WTC11 (cell line): ENCODE measurements at regions of chr9 and their contacts with region 1.

Region 1: DNA sequence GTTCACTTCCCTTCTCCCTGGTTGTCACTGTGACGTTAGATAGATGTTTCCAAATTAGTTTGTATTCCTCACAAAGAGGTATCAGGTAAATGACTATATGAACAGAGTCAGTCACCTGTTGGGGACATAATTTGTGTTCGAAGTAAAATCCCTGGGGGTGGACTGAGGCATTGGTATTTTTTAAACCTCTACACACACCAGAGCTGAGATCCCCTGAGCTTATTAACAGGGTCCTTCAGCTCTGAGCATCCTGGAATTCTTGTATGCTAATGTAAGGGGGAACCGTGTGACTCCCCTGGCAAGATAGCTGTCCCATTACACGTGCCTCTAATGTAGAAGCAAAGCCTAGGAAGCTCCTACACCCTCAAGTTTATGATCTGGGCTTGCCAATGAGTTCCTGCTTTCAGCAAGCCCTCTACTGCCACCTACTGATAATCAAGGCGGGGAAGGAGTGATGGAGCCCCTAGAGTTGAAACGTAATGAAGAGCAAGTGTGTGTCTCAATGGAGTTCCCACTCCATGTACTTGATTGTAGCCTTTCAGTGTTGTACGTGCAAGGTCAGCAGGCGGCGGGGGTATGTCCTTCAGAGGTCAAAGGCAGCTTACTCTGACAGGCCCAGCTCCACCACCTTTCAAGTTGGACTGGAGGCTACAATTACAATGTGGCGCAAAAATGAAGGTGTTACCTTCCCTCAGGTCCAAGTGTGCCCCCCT is 14.4 kb downstream of the PRKACG start:
- DNase-seq: peak; percentile 73
- ATAC-seq: peak; percentile 96
- H3K4me3 Mint-ChIP-seq: no peak overlapping the region
- H3K27ac Mint-ChIP-seq: no peak overlapping the region; the same call in 1 of the 2 replicates
- H3K4me1 Mint-ChIP-seq: peaks cover 34% of the 10 kb centered on the region
- H3K27me3 Mint-ChIP-seq: no peaks in the 10 kb centered on the region
- CTCF ChIP-seq: peak; percentile 68

Region 2: DNA sequence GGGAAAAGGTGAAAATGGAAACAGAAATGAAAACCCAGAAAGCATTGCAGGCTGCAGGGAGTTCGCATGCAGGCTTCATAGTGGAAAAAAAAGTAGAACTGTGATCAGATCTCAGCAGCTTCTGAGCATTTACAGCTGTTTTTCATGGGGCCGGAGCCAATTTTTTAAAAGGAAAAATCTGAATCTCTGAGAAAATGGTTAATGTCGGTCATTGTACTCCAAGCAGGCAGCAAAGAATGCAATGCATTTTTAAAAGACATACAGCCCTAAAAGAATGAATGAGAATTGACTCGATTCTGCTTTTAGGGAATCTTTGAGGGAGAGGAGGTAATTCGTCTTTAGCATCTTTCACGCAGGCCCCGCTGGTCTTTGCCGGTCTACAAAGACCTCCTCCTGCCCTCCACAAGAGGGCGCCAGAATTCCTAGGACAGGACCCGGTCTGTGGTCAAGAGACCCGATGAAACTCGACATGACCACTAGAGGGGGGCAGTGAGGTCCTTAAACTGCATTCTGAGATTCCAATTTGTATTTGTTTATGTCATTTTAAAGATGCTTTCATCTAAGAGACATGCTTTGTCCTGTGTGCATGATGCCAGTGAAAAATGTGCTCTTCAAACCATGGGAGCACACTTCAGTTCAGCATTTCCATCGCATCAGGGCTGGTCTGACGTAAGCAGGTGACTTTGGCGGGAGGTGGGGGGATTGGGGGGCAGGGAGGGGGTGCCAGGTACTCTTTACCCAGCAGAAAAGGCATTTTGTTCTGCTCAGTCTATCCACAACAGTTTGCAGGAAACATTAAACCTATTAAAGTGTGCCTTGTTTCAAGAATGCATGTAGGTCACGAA is 415.1 kb before region 1 on chr9:
- CTCF ChIA-PET with region 1: interaction called, 27 read pairs
- POLR2A ChIA-PET with region 1: no interaction called
- DNase-seq: peak; percentile 82
- ATAC-seq: peak; percentile 93
- H3K4me3 Mint-ChIP-seq: peak overlapping the region; percentile 48
- H3K27ac Mint-ChIP-seq: peak overlapping the region; percentile 66; the same call in 1 of the 2 replicates
- H3K4me1 Mint-ChIP-seq: peaks cover 8% of the 10 kb centered on the region
- H3K27me3 Mint-ChIP-seq: peaks cover 4% of the 10 kb centered on the region
- CTCF ChIP-seq: peak; percentile 95

Region 3: GRCh38 chr9:68844631-68845612 is 154.6 kb before region 1 on chr9:
- CTCF ChIA-PET with region 1: interaction called, 15 read pairs
- POLR2A ChIA-PET with region 1: no interaction called
- DNase-seq: peak; percentile 65
- ATAC-seq: peak; percentile 83
- H3K4me3 Mint-ChIP-seq: no peak overlapping the region
- H3K27ac Mint-ChIP-seq: no peak overlapping the region
- H3K4me1 Mint-ChIP-seq: peaks cover 15% of the 10 kb centered on the region
- H3K27me3 Mint-ChIP-seq: no peaks in the 10 kb centered on the region
- CTCF ChIP-seq: peak; percentile 49

Region 4: GRCh38 chr9:69012696-69013381 is 13.3 kb after region 1 on chr9:
- CTCF ChIA-PET with region 1: interaction called, 12 read pairs
- POLR2A ChIA-PET with region 1: no interaction called
- DNase-seq: no peak
- ATAC-seq: no peak
- H3K4me3 Mint-ChIP-seq: no peak overlapping the region
- H3K27ac Mint-ChIP-seq: no peak overlapping the region
- H3K4me1 Mint-ChIP-seq: peaks cover 25% of the 10 kb centered on the region
- H3K27me3 Mint-ChIP-seq: no peaks in the 10 kb centered on the region
- CTCF ChIP-seq: no peak